Dorsolateral prefrontal cortex (tissue), 120 donors: ENCODE measurements at regions of chr1 and their contacts with region 1.

Region 1: DNA sequence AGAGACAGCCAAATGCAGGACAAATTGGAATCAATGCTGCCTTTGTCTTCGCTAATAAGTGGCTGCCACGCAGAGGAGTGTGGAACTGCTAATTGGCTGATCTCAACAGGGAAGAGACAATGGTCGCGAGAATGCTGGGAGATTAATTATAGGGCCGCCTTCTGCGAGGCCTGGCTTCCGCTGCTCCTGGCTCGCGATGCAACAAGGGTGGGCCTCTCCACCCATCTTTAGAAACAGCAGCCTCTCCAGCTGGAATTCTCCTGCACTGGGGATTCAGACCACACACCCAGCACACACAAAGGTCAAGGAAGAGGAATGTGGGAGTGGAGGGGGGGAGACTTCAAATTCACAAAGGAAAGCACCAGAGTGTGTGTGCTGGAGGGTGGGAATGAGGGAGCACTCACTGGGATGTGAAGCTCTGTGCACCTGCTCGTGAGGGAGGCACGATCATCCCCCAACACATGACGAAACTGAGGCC is 200.7 kb upstream of the GRIK3 start:
- DNase-seq: peak in 5 of 10 donors; percentile 26 to 70 (median 52)
- H3K4me3 ChIP-seq: peak overlapping the region in 6 of 59 donors; percentile 2 to 33 (median 14)
- H3K27ac ChIP-seq: peak overlapping the region in 9 of 59 donors; percentile 1 to 59 (median 31)
- H3K27me3 ChIP-seq: peaks cover 0 to 3% (median 0%) of the 10 kb centered on the region in 45 donors
- CTCF ChIP-seq: peak in 3 of 56 donors; percentile 8 to 41 (median 10)

Region 2: DNA sequence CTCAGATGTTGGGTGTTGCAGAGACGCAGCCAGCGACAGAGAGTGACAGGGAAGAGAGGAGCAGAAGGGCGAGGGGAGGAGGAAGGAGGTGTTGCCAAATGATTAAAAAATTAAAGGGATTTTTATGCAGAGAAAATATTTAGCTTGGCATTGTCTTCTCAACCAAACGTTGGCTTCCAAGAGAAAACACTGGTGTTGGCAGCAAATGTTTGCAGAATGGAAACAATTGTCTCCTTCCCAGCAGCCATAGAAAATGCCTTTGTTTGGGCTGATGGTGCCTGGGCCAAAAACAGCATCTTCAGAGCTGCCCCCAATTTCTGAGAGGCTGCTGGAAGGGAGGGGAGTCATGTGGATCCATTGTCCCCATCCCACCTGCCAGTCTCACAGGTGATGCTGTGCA is 170.9 kb before region 1 on chr1:
- intact Hi-C with region 1: loop called in 1 of 2 experiments (anchors 10 kb)
- DNase-seq: peak in 2 of 10 donors; percentile 37 to 38
- H3K4me3 ChIP-seq: no peak overlapping the region
- H3K27ac ChIP-seq: peak overlapping the region in 54 of 59 donors; percentile 18 to 88 (median 76)
- H3K27me3 ChIP-seq: peaks cover 0 to 6% (median 0%) of the 10 kb centered on the region in 45 donors
- CTCF ChIP-seq: no peak

Region 3: DNA sequence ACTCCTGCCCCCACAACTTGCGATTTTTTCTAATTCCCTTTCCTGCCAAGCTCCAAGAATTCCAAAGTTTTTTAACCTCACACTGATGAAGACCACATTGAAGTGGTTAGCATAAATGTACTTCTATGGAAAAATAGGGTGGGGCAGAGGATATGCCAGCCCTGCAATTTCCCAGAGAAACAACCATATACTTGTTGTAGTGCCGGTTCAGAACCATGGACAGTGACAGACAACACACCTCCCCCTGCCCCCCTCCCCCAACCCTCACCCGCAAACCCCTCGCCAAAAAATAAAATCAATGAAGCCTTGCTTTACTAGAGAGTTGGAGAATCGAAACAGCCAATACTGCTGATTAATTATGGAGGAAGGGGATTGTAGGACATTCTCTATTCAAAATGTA is 91.2 kb before region 1 on chr1:
- intact Hi-C with region 1: no loop called
- DNase-seq: no peak
- H3K4me3 ChIP-seq: no peak overlapping the region
- H3K27ac ChIP-seq: no peak overlapping the region
- H3K27me3 ChIP-seq: no peaks in the 10 kb centered on the region
- CTCF ChIP-seq: no peak

Region 4: DNA sequence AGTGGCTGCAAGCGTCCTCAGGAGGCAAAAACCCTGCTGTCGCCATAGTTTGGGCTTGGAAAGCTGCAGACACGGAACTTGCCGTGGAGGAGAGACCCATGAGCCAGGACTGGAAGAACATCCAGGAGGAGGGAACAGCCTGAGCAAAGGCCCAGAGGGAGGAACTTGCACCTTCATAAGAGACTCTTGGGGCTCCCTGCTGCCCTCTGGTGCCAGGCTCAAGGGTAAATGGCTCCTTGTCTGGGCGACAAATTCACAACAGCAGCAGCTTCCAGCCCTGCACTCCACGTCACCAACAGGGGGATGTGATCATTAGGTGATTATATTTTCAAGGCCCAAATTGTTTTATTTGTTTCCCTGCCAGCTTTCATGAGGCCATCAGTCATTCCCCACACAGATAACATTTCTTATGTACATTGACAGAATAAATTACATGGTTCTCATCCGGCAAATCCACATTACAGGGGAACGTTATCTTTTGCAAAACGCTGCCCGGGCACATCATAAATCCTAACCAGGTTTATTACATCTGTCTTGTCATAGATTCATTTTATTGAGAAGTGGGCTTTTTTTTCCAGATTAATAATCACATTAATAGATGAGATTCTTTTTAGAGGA is 57.6 kb before region 1 on chr1:
- intact Hi-C with region 1: loop called in 1 of 2 experiments (anchors 5 kb)
- DNase-seq: peak in 7 of 10 donors; percentile 38 to 67 (median 57)
- H3K4me3 ChIP-seq: no peak overlapping the region
- H3K27ac ChIP-seq: no peak overlapping the region
- H3K27me3 ChIP-seq: peaks cover 0 to 8% (median 0%) of the 10 kb centered on the region in 45 donors
- CTCF ChIP-seq: peak in 49 of 56 donors; percentile 18 to 61 (median 43)

Region 5: DNA sequence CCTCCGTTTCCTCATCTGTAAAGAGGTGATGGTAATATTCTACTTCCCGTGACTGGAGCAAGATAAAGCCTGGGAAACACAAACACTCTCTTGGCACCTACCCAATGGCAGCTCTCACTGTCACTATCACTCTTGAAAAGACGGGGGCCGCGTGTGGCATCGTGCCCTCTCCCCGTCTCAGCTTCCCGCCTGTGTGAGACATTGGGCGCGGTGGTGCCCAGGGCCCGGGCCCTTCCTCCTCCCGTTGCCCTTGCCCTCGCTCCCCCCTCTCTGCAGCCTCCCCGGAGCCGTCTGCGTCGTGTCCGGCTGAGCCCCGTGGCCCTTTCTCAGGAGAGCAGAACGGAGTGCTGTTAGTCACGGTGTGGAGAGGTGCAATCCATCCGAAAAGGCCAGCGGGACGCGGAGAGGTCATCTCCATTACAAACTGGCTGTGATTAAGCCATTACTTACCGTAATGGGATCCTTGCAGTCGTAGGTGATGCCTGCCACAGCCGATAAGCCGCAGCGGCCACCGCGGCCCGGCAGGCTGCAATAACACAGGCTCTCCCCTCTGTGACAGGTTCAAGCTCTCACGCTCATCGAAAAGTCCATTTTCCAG is 83.0 kb after region 1 on chr1:
- intact Hi-C with region 1: loop called in 1 of 2 experiments (anchors 5 kb)
- DNase-seq: peak in 1 of 10 donors; percentile 26
- H3K4me3 ChIP-seq: peak overlapping the region in 39 of 59 donors; percentile 2 to 54 (median 31)
- H3K27ac ChIP-seq: no peak overlapping the region
- H3K27me3 ChIP-seq: peaks cover 0 to 23% (median 5%) of the 10 kb centered on the region in 45 donors
- CTCF ChIP-seq: no peak